MCF 10A (cell line): ENCODE measurements at regions of chr4 and their contacts with region 1.

Region 1: DNA sequence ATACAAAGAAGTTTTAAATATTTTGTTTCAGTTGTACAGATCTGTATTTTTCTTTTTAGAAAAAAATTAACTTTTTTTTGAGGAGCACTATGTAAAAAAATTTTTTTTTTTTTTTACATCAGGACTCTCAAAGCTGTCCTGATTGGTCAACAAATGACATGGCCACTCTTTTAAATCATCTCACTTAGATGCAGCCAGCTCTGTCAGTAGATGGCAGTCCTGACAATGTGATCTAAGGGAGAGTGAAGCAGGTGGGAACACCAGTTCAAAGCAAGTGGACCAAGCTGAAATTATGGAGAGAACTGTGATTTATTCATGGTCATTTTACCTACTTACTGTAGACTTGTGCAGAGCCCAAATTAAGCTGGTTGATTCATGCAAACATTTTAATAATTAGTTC is 174.6 kb upstream of the GPRIN3 start:
- DNase-seq: peak; percentile 76
- H3K4me3 Mint-ChIP-seq: no peak overlapping the region
- H3K27ac Mint-ChIP-seq: no peak overlapping the region
- H3K4me1 Mint-ChIP-seq: no peaks in the 10 kb centered on the region
- H3K27me3 Mint-ChIP-seq: no peaks in the 10 kb centered on the region
- CTCF ChIP-seq: peak; percentile 18

Region 2: GRCh38 chr4:89492581-89493071 is 10.4 kb after region 1 on chr4:
- CTCF ChIA-PET with region 1: interaction called, 11 read pairs
- POLR2A ChIA-PET with region 1: no interaction called
- intact Hi-C with region 1: no loop called
- DNase-seq: peak; percentile 86
- H3K4me3 Mint-ChIP-seq: peak overlapping the region; percentile 52
- H3K27ac Mint-ChIP-seq: peak overlapping the region; percentile 55
- H3K4me1 Mint-ChIP-seq: peaks cover 18% of the 10 kb centered on the region
- H3K27me3 Mint-ChIP-seq: no peaks in the 10 kb centered on the region
- CTCF ChIP-seq: no peak

Region 3: GRCh38 chr4:89598602-89599001 is 116.4 kb after region 1 on chr4:
- CTCF ChIA-PET with region 1: interaction called, 3 read pairs
- POLR2A ChIA-PET with region 1: no interaction called
- intact Hi-C with region 1: loop called (anchors 2 kb)
- DNase-seq: peak; percentile 41
- H3K4me3 Mint-ChIP-seq: no peak overlapping the region
- H3K27ac Mint-ChIP-seq: no peak overlapping the region
- H3K4me1 Mint-ChIP-seq: no peaks in the 10 kb centered on the region
- H3K27me3 Mint-ChIP-seq: no peaks in the 10 kb centered on the region
- CTCF ChIP-seq: peak; percentile 38

Region 4: GRCh38 chr4:89619206-89619962 is 137.1 kb after region 1 on chr4:
- CTCF ChIA-PET with region 1: no interaction called
- POLR2A ChIA-PET with region 1: no interaction called
- intact Hi-C with region 1: no loop called
- DNase-seq: no peak
- H3K4me3 Mint-ChIP-seq: no peak overlapping the region
- H3K27ac Mint-ChIP-seq: no peak overlapping the region
- H3K4me1 Mint-ChIP-seq: no peaks in the 10 kb centered on the region
- H3K27me3 Mint-ChIP-seq: no peaks in the 10 kb centered on the region
- CTCF ChIP-seq: no peak

Region 5: GRCh38 chr4:89898304-89898716 is 416.1 kb after region 1 on chr4:
- CTCF ChIA-PET with region 1: interaction called, 8 read pairs
- POLR2A ChIA-PET with region 1: interaction called, 3 read pairs
- intact Hi-C with region 1: loop called (anchors 1 kb)
- DNase-seq: no peak
- H3K4me3 Mint-ChIP-seq: no peak overlapping the region
- H3K27ac Mint-ChIP-seq: no peak overlapping the region
- H3K4me1 Mint-ChIP-seq: no peaks in the 10 kb centered on the region
- H3K27me3 Mint-ChIP-seq: no peaks in the 10 kb centered on the region
- CTCF ChIP-seq: no peak